Astrocyte of the spinal cord (primary cell): ENCODE measurements at regions of chr10 and their contacts with region 1.

Region 1: DNA sequence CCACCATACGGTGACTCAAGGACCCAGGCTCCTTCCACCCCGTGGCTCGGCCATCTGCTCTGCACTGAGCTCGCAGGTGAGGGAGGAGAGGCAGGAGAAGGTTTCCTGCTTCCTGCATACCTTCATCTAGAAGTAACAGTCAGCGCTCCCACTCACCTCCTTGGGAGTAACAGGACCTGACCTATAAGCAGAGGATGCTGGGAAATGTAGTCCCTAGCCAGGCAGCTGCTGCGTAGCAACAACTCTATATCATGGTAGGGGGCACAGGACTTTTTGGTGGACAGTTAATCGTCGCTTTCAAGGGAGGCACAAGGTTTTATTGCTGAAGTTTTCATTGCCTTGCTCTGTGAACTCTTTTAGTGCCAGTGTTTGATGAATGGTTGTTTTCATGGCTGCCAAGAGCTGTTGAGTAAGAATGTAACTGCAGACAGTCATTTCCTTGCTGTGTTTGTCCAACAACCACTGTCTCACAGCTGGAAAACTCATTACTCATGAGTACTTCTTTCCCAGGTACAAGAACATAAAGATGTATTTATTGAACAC is 10.2 kb upstream of the ZFYVE27 start:
- DNase-seq: peak; percentile 85
- H3K4me3 ChIP-seq: peak overlapping the region; percentile 25
- CTCF ChIP-seq: no peak

Region 2: GRCh38 chr10:97596101-97597062 is 130.3 kb before region 1 on chr10:
- in situ Hi-C with region 1: no loop called
- DNase-seq: peak; percentile 88
- H3K4me3 ChIP-seq: no peak overlapping the region
- CTCF ChIP-seq: peak; percentile 5

Region 3: GRCh38 chr10:97686962-97687784 is 39.5 kb before region 1 on chr10 and contains the start of gene AVPI1:
- in situ Hi-C with region 1: loop called (anchors 5 kb)
- DNase-seq: peak; percentile 98
- H3K4me3 ChIP-seq: peak within 1 kb of the TSS; percentile 72
- CTCF ChIP-seq: no peak

Region 4: GRCh38 chr10:97805096-97805884 is 78.6 kb after region 1 on chr10:
- in situ Hi-C with region 1: no loop called
- DNase-seq: no peak
- H3K4me3 ChIP-seq: no peak overlapping the region
- CTCF ChIP-seq: no peak